ENCODE measurements at regions of chr2 and their contacts with region 1.

Region 1: GRCh38 chr2:159712143-159712928 is at the start of gene MARCHF7:
- DNase-seq: peak; percentile 97
- ATAC-seq: peak; percentile 94
- H3K4me3 ChIP-seq: peak within 1 kb of the TSS; percentile 88
- H3K27ac ChIP-seq: peak within 1 kb of the TSS; percentile 99
- H3K4me1 ChIP-seq: peaks cover 11 to 17% of the 10 kb centered on the region in 2 experiments; a peak in 4 of 5 replicates
- H3K27me3 ChIP-seq: no peaks in the 10 kb centered on the region; a peak in 1 of 5 replicates
- CTCF ChIP-seq: peak; percentile 78 to 89 (median 86)
- EP300 ChIP-seq: peak; percentile 5; the same call in 1 of the 2 replicates
- POLR2A ChIP-seq: peak; percentile 99
- RAD21 ChIP-seq: peak; percentile 88 to 96
- polyA plus RNA-seq, gene MARCHF7: 86.7 to 106 TPM

Region 2: GRCh38 chr2:158903711-158904443 is 808.5 kb before region 1 on chr2:
- CTCF ChIA-PET with region 1: no interaction called
- POLR2A ChIA-PET with region 1: no interaction called
- in situ Hi-C with region 1: no loop called
- intact Hi-C with region 1: loop called (anchors 5 kb)
- DNase-seq: no peak
- ATAC-seq: no peak
- H3K4me3 ChIP-seq: no peak overlapping the region
- H3K27ac ChIP-seq: no peak overlapping the region
- H3K4me1 ChIP-seq: no peaks in the 10 kb centered on the region
- H3K27me3 ChIP-seq: peaks cover 4% of the 10 kb centered on the region in 2 experiments; a peak in 2 of 5 replicates
- CTCF ChIP-seq: no peak
- EP300 ChIP-seq: no peak
- POLR2A ChIP-seq: no peak
- RAD21 ChIP-seq: no peak

Region 3: DNA sequence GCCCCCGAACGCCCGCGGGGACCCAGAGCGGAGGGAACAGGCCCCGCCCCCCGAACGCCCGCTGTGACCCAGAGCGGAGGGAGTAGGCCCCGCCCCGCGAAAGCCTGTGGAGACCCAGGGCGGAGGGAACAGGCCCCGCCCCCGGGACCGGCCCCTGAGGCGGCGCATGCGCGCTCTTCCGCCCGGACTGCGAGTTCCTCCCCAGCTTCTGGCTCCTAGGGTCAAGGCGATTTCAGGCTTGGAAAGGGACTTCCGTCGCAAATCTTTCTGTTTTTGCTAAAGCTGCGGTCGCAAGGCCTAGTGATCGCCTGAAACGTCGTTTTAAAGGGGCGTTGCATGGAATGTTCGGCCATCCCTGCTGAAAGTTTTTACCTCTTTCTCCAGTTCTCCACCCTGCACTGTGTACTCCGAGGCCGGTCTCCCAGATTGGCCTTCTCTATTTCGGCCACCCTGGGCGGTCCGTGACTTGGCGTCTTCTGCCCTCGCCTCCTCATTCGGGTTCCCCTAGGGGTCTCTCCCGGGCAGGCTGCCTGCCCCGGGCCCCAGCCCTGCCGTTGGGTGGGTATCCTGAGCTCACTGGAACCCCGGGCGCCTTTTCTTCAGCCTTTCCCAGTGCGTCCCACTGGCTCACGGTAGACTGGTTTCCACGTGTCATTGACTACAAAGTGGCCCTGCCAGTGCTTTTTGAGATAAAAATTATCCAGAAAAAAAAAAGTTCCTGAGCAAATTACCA is 425.5 kb before region 1 on chr2:
- CTCF ChIA-PET with region 1: no interaction called
- POLR2A ChIA-PET with region 1: interaction called, 11 read pairs
- in situ Hi-C with region 1: no loop called
- intact Hi-C with region 1: loop called (anchors 1 kb)
- DNase-seq: peak; percentile 99 to 100 (median 100)
- ATAC-seq: peak; percentile 96
- H3K4me3 ChIP-seq: peak overlapping the region; percentile 75
- H3K27ac ChIP-seq: peak overlapping the region; percentile 90
- H3K4me1 ChIP-seq: peaks cover 22 to 23% of the 10 kb centered on the region in 2 experiments
- H3K27me3 ChIP-seq: no peaks in the 10 kb centered on the region
- CTCF ChIP-seq: no peak
- EP300 ChIP-seq: no peak
- POLR2A ChIP-seq: peak; percentile 96
- RAD21 ChIP-seq: peak in 1 of 2 experiments; percentile 13; a peak in 1 of 4 replicates

Region 4: GRCh38 chr2:159516241-159516766 is 196.0 kb before region 1 on chr2:
- CTCF ChIA-PET with region 1: interaction called, 4 read pairs
- POLR2A ChIA-PET with region 1: no interaction called
- in situ Hi-C with region 1: no loop called
- intact Hi-C with region 1: loop called (anchors 1 kb)
- DNase-seq: peak in 2 of 4 experiments; percentile 20 to 26
- ATAC-seq: peak; percentile 85
- H3K4me3 ChIP-seq: peak overlapping the region; percentile 20
- H3K27ac ChIP-seq: peak overlapping the region; percentile 76
- H3K4me1 ChIP-seq: peaks cover 0 to 7% of the 10 kb centered on the region in 2 experiments; a peak in 1 of 5 replicates
- H3K27me3 ChIP-seq: no peaks in the 10 kb centered on the region
- CTCF ChIP-seq: peak in 1 of 3 experiments; percentile 35; a peak in 1 of 6 replicates
- EP300 ChIP-seq: no peak
- POLR2A ChIP-seq: no peak
- RAD21 ChIP-seq: peak; percentile 27 to 45; a peak in 2 of 4 replicates

Region 5: GRCh38 chr2:159615140-159615951 is 97.0 kb before region 1 on chr2:
- CTCF ChIA-PET with region 1: no interaction called
- POLR2A ChIA-PET with region 1: interaction called, 30 read pairs
- in situ Hi-C with region 1: no loop called
- intact Hi-C with region 1: loop called (anchors 1 kb)
- DNase-seq: peak; percentile 88 to 95 (median 90)
- ATAC-seq: peak; percentile 89
- H3K4me3 ChIP-seq: peak overlapping the region; percentile 66
- H3K27ac ChIP-seq: peak overlapping the region; percentile 96
- H3K4me1 ChIP-seq: peaks cover 5% of the 10 kb centered on the region in 2 experiments; a peak in 3 of 5 replicates
- H3K27me3 ChIP-seq: no peaks in the 10 kb centered on the region
- CTCF ChIP-seq: no peak; a peak in 1 of 6 replicates
- EP300 ChIP-seq: no peak
- POLR2A ChIP-seq: peak; percentile 87
- RAD21 ChIP-seq: no peak

Region 6: GRCh38 chr2:159738509-159739390 is 26.4 kb after region 1 on chr2:
- CTCF ChIA-PET with region 1: no interaction called
- POLR2A ChIA-PET with region 1: interaction called, 10 read pairs
- in situ Hi-C with region 1: no loop called
- intact Hi-C with region 1: no loop called
- DNase-seq: peak in 3 of 4 experiments; percentile 28 to 48 (median 38)
- ATAC-seq: peak; percentile 72
- H3K4me3 ChIP-seq: no peak overlapping the region
- H3K27ac ChIP-seq: no peak overlapping the region
- H3K4me1 ChIP-seq: peaks cover 0 to 9% of the 10 kb centered on the region in 2 experiments; a peak in 2 of 5 replicates
- H3K27me3 ChIP-seq: no peaks in the 10 kb centered on the region
- CTCF ChIP-seq: no peak
- EP300 ChIP-seq: no peak
- POLR2A ChIP-seq: no peak; the same call in none of the 2 replicates
- RAD21 ChIP-seq: no peak